Caco-2 (cell line): ENCODE measurements at regions of chr21 and their contacts with region 1.

Region 1: GRCh38 chr21:26170471-26171257 is at the start of gene APP:
- DNase-seq: peak; percentile 75 to 92
- H3K4me3 ChIP-seq: peak within 1 kb of the TSS; percentile 97
- H3K4me3 Mint-ChIP-seq: peak within 1 kb of the TSS; percentile 86
- H3K27ac Mint-ChIP-seq: peak within 1 kb of the TSS; percentile 88
- H3K4me1 ChIP-seq: peaks cover 25% of the 10 kb centered on the region
- H3K4me1 Mint-ChIP-seq: peaks cover 18% of the 10 kb centered on the region
- H3K27me3 ChIP-seq: no peaks in the 10 kb centered on the region
- H3K27me3 Mint-ChIP-seq: no peaks in the 10 kb centered on the region
- CTCF ChIP-seq: peak; percentile 69 to 84
- total RNA-seq, gene APP: 324 and 331 TPM in 2 replicates

Region 2: GRCh38 chr21:25734904-25735645 is 435.6 kb before region 1 on chr21 and contains the starts of genes ATP5PF and GABPA:
- CTCF ChIA-PET with region 1: no interaction called
- POLR2A ChIA-PET with region 1: no interaction called
- intact Hi-C with region 1: loop called (anchors 10 kb)
- DNase-seq: peak; percentile 95 to 98
- H3K4me3 ChIP-seq: peak within 1 kb of the TSS; percentile 60
- H3K4me3 Mint-ChIP-seq: peak within 1 kb of the TSS; percentile 92
- H3K27ac Mint-ChIP-seq: peak within 1 kb of the TSS; percentile 98
- H3K4me1 ChIP-seq: peaks cover 7% of the 10 kb centered on the region; the same call in 1 of the 2 replicates
- H3K4me1 Mint-ChIP-seq: no peaks in the 10 kb centered on the region
- H3K27me3 ChIP-seq: no peaks in the 10 kb centered on the region
- H3K27me3 Mint-ChIP-seq: no peaks in the 10 kb centered on the region
- CTCF ChIP-seq: no peak
- total RNA-seq, gene ATP5PF: 156 and 175 TPM in 2 replicates
- total RNA-seq, gene GABPA: 17.4 and 20.3 TPM in 2 replicates

Region 3: DNA sequence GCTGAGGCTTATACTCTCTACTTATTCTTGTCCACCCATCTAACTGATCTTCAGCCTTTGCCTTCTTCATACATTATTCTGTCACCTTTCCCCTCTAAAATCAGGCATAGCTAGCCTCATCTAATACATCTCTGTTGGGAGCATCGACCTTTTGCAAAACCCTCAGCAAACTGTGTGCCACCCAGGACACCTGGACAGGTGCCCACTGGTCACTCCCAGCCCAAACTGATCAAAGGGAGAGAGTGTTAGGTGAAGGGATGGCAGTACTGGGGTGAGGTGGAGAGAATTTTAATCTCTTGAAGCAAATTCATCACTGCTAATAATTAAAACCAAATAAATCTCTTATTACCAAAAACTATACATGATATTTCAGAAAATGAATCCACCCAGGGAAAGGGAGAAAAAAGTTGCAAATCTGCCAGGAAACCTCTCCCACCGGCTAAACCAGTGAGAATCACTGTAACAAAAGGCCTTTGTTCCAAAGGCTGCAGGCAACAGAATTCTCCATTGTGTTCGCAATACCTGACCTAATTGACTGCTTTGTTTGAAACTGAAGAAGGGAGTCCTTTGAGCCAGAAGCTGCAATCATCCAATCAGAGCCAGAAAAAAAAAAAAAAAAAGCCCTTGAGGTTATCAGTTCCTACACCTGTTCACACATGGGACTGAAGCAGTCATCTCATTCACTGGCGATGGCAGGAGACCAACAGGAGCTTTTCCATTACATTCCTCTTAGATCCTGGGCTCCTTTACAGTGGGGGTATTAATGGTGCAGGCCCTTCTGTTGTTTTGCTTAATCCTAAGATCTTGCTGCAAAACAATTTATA is 172.7 kb before region 1 on chr21:
- CTCF ChIA-PET with region 1: no interaction called
- POLR2A ChIA-PET with region 1: no interaction called
- intact Hi-C with region 1: loop called (anchors 2 kb)
- DNase-seq: peak; percentile 76 to 81
- H3K4me3 ChIP-seq: no peak overlapping the region
- H3K4me3 Mint-ChIP-seq: peak overlapping the region; percentile 24
- H3K27ac Mint-ChIP-seq: peak overlapping the region; percentile 65
- H3K4me1 ChIP-seq: peaks cover 36% of the 10 kb centered on the region
- H3K4me1 Mint-ChIP-seq: peaks cover 31% of the 10 kb centered on the region
- H3K27me3 ChIP-seq: no peaks in the 10 kb centered on the region
- H3K27me3 Mint-ChIP-seq: no peaks in the 10 kb centered on the region
- CTCF ChIP-seq: no peak

Region 4: GRCh38 chr21:26007951-26008498 is 162.6 kb before region 1 on chr21:
- CTCF ChIA-PET with region 1: no interaction called
- POLR2A ChIA-PET with region 1: no interaction called
- intact Hi-C with region 1: no loop called
- DNase-seq: no peak
- H3K4me3 ChIP-seq: no peak overlapping the region
- H3K4me3 Mint-ChIP-seq: no peak overlapping the region
- H3K27ac Mint-ChIP-seq: no peak overlapping the region
- H3K4me1 ChIP-seq: no peaks in the 10 kb centered on the region
- H3K4me1 Mint-ChIP-seq: no peaks in the 10 kb centered on the region
- H3K27me3 ChIP-seq: no peaks in the 10 kb centered on the region
- H3K27me3 Mint-ChIP-seq: no peaks in the 10 kb centered on the region
- CTCF ChIP-seq: no peak

Region 5: DNA sequence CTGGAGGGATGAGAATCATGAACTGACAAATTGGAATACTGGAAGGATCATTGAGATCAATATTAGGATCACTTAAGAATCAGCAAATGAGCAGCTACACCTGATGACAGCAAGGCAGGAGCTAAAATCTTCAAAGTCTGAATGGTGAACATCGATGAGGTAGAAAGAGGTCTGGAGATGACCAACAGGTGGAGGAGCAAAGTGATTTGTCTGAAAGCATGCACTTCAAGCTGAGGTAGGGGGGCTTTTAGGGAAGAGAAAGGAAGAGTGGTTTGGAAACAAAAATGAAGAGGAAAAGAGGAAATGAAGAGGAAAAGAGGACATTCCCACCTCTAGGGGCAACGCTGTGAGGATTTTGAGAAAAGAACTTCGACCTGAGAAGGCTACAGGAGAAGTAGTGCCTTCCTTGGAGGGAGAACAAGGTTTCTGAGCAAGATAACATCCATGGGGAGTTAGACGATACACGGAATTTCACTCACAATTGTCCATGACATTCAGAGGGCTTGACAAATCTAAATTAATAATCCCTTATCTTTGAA is 79.1 kb before region 1 on chr21:
- CTCF ChIA-PET with region 1: no interaction called
- POLR2A ChIA-PET with region 1: no interaction called
- intact Hi-C with region 1: no loop called
- DNase-seq: peak in 1 of 2 experiments; percentile 17
- H3K4me3 ChIP-seq: no peak overlapping the region
- H3K4me3 Mint-ChIP-seq: no peak overlapping the region
- H3K27ac Mint-ChIP-seq: no peak overlapping the region
- H3K4me1 ChIP-seq: no peaks in the 10 kb centered on the region
- H3K4me1 Mint-ChIP-seq: peaks cover 15% of the 10 kb centered on the region
- H3K27me3 ChIP-seq: no peaks in the 10 kb centered on the region
- H3K27me3 Mint-ChIP-seq: no peaks in the 10 kb centered on the region
- CTCF ChIP-seq: peak; percentile 14 to 28

Region 6: DNA sequence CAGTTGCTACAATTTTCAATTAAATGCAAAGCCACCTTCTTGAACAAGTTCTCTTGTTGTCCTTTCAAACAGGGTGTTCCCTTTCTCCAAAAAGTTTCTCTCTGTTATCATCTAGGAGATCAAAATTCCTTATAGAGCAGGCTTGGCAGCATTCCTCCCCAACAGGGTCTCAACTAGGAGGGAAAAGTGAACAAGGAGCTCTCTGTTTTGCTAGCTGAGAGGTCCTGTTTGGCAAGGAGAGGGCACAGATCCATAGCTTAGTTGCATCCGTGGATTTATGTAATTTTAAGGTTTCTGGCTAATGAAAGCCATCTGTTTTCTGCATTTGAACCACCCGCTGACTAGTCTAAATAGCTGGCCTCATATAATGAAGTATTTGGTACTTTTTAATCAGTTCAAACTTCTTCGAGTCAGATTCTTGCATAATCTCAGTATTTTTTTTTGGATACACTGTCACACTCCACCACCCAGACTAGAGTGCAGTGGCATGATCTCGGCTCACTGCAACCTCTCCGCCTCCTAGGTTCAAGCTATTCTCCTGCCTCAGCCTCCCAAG is 54.1 kb before region 1 on chr21:
- CTCF ChIA-PET with region 1: no interaction called
- POLR2A ChIA-PET with region 1: interaction called, 4 read pairs
- intact Hi-C with region 1: loop called (anchors 1 kb)
- DNase-seq: peak; percentile 57 to 61
- H3K4me3 ChIP-seq: no peak overlapping the region
- H3K4me3 Mint-ChIP-seq: peak overlapping the region; percentile 62
- H3K27ac Mint-ChIP-seq: peak overlapping the region; percentile 64
- H3K4me1 ChIP-seq: peaks cover 40% of the 10 kb centered on the region
- H3K4me1 Mint-ChIP-seq: peaks cover 24% of the 10 kb centered on the region
- H3K27me3 ChIP-seq: no peaks in the 10 kb centered on the region
- H3K27me3 Mint-ChIP-seq: no peaks in the 10 kb centered on the region
- CTCF ChIP-seq: no peak

Region 7: GRCh38 chr21:26715878-26716506 is 545.3 kb after region 1 on chr21:
- CTCF ChIA-PET with region 1: no interaction called
- POLR2A ChIA-PET with region 1: no interaction called
- intact Hi-C with region 1: loop called (anchors 5 kb)
- DNase-seq: peak; percentile 37 to 43
- H3K4me3 ChIP-seq: no peak overlapping the region
- H3K4me3 Mint-ChIP-seq: no peak overlapping the region
- H3K27ac Mint-ChIP-seq: peak overlapping the region; percentile 44
- H3K4me1 ChIP-seq: peaks cover 5% of the 10 kb centered on the region; the same call in 1 of the 2 replicates
- H3K4me1 Mint-ChIP-seq: peaks cover 15% of the 10 kb centered on the region
- H3K27me3 ChIP-seq: no peaks in the 10 kb centered on the region
- H3K27me3 Mint-ChIP-seq: no peaks in the 10 kb centered on the region
- CTCF ChIP-seq: peak; percentile 52 to 56